ENCODE measurements at regions of chr3 and their contacts with region 1.

Region 1: DNA sequence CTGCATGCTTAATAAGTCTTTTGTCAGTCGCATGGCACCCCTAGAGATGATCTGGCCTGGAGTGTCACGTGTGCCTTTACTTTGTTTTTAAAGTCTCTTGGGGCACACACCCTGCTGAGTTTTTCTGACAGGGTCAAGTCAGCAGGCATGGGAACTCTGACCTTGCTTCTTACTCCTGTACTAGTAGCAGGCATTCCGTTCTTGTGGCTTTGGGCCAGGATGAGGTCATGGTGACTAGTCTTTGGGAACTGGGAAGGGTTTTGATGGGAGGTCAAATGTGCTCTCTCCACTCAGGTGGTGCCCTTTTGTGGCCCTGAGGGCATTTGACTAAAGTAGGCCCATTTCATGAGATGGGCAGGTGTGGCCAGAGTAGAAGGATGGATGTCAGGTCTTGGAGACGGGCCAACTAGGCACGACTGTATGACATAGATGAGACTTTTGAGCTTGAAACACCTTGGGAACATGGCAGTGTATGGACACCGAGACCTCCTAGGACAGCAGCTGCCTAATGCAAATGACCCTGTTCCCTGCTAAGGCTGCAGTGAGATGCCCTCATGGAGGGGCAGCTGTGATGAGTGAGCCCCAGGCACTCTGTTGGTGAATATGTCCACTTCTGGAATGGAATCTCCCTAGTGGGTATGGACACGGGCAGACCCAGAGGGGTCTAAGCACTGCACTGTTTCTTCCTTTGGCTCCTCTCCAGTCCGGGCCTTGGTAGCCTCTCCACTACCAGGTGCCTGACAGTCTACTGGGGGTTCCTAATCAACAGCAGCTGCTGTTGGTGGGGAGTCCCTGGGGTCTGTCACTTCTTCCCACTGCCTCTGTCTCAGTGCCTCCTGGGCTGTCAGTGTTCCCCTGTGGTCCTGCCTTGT is 16.4 kb downstream of the SRPRB start:
- DNase-seq: peak in 1 of 2 donors; percentile 87
- ATAC-seq: peak in 7 of 8 donors; percentile 35 to 83 (median 65)
- H3K4me3 ChIP-seq: no peak overlapping the region
- H3K27ac ChIP-seq: peak overlapping the region in 1 of 10 donors; percentile 58
- H3K4me1 ChIP-seq: peaks cover 0 to 17% (median 5%) of the 10 kb centered on the region in 9 donors
- H3K27me3 ChIP-seq: no peaks in the 10 kb centered on the region
- CTCF ChIP-seq: peak in 5 of 9 donors; percentile 28 to 62 (median 43)

Region 2: GRCh38 chr3:133573054-133573628 is 248.9 kb before region 1 on chr3:
- intact Hi-C with region 1: no loop called
- DNase-seq: peak; percentile 100
- ATAC-seq: peak; percentile 92 to 98 (median 96)
- H3K4me3 ChIP-seq: peak overlapping the region in 9 of 10 donors; percentile 66 to 91 (median 82)
- H3K27ac ChIP-seq: peak overlapping the region; percentile 94 to 98 (median 96)
- H3K4me1 ChIP-seq: peaks cover 5 to 74% (median 53%) of the 10 kb centered on the region in 9 donors
- H3K27me3 ChIP-seq: no peaks in the 10 kb centered on the region
- CTCF ChIP-seq: peak in 6 of 9 donors; percentile 7 to 48 (median 34)

Region 3: DNA sequence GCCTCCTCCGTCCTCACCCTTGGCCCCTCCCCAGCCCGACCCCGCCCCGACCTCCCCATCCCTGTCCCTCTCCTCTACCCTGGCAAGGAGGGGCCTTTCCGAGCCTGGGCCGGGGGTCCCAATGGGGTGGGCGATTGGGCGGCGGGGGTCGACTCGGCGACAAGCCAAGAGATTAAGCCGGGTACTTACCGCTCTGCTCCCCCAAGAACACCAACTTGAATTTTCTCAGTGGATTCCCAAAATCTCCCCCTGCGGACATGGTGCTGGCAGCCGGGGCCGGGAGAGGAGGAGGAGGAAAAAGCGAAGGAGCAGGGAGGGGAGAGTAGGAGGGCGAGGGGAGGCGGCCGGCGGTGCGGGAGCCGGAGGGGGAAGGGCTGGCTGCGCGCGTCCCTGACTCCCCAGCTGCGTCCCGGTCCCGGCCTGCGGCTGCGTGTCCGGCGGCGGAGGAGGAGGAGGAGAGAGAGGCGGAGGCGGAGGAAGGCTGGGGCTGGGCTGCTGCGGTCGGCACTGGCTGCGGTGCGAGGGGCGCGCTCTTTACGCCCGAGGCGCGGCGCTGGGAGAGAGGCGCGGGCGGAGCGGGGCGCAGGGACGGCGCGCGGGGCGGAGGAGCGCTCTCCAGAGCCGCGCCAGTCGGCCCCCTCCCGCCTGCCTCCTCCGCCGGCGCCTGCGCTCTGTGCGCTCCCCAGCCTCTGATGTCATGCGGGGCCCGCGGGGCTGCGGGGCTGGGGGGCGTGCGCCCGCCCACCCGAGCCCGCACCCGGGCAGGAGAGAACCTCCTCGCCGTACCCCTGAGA is 73.4 kb after region 1 on chr3 and contains the start of gene RAB6B:
- intact Hi-C with region 1: loop called in 8 of 10 experiments (anchors 2 to 5 kb)
- DNase-seq: peak; percentile 46 to 64
- ATAC-seq: peak; percentile 70 to 89 (median 82)
- H3K4me3 ChIP-seq: peak within 1 kb of the TSS; percentile 44 to 90 (median 70)
- H3K27ac ChIP-seq: peak within 1 kb of the TSS in 9 of 10 donors; percentile 31 to 73 (median 51)
- H3K4me1 ChIP-seq: peaks cover 14 to 49% (median 23%) of the 10 kb centered on the region in 9 donors
- H3K27me3 ChIP-seq: peaks cover 0 to 52% (median 8%) of the 10 kb centered on the region in 7 donors
- CTCF ChIP-seq: no peak
- total RNA-seq, gene RAB6B: 39.2 to 73.8 (median 47.4) TPM

Region 4: DNA sequence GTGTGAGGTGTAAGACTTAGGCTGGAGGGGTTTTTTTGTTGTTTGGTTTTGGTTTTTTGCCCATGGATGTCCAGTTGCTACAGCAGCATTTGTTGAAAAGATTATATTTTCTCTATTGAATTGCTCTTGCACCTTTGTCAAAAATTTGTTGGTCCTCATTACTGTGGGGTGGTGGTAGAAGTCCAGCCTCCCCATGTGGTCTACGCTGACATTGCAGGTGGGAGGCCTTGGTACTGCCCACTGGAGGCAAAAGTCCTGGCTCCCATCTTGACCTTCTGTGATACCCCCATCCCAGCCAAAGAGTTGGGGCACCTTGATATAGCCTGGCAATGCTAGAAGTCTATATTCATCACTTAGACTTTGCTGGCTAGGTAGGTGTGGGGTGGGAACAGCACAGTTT is 79.1 kb after region 1 on chr3:
- intact Hi-C with region 1: loop called in 8 of 10 experiments (anchors 2 to 5 kb)
- DNase-seq: no peak
- ATAC-seq: peak in 3 of 8 donors; percentile 43 to 65 (median 60)
- H3K4me3 ChIP-seq: no peak overlapping the region
- H3K27ac ChIP-seq: no peak overlapping the region
- H3K4me1 ChIP-seq: peaks cover 0 to 6% (median 4%) of the 10 kb centered on the region in 9 donors
- H3K27me3 ChIP-seq: peaks cover 0 to 24% (median 0%) of the 10 kb centered on the region in 7 donors
- CTCF ChIP-seq: peak; percentile 14 to 58 (median 53)

Region 5: DNA sequence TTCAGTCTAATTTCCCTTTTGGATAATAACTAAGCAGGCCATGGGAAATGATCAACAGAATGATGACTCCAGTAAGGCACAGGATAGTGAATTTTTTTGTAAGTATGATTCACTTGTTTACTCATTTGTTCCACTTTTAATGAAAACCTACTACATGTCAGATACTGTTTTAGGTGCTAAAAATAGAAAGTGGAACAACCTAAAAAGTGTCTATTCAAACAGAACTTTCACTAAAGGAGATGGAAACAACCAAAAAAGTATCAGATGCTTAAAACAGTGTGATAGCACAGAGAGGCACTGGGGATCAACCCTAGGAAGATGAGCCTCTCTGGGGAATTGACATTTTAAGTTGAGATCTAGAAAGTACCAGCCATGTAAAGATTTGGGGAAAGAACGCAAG is 417.5 kb after region 1 on chr3:
- intact Hi-C with region 1: loop called in 1 of 10 experiments (anchors 10 kb)
- DNase-seq: no peak
- ATAC-seq: no peak
- H3K4me3 ChIP-seq: no peak overlapping the region
- H3K27ac ChIP-seq: peak overlapping the region in 2 of 10 donors; percentile 14 to 46
- H3K4me1 ChIP-seq: peaks cover 6 to 86% (median 70%) of the 10 kb centered on the region in 9 donors
- H3K27me3 ChIP-seq: no peaks in the 10 kb centered on the region
- CTCF ChIP-seq: no peak